Right ventricle myocardium inferior (tissue), 1 donor: ENCODE measurements at regions of chr14 and their contacts with region 1.

Region 1: DNA sequence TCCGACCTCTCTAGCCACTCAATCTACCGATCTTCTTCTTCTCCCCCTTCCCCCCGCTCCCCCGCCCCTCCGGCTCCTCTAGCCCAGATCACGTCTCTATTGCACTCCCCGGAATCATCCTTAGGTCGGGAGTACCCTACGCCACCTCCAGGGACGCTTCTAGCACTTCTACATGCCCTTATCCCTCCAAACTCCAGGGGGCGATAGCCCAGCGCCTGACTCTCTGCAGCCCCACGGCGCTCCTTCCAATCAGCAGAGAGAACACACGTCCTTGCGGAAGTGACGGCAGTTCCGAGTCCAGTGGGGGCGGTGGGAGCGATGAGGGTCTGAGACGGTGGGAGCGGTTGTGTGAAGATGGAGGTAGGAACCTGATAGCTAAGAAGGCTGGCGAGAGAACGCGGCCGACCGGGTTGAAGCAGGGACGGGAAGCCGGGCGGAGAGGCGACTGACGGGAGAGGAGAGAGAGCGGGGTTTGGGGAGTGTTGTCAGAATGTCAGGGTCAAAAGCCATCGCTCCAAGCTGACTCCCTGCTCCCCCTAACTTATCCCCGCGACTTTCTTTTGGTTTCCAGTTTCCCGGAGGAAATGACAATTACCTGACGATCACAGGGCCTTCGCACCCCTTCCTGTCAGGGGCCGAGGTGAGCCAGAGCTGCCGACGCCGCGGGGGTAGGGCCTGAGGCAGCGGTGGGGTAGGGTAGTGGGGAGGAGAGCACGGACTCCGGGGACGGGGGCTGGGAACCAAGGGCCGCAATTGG is at the starts of genes RAB2B and TOX4:
- DNase-seq: peak; percentile 96
- ATAC-seq: peak; percentile 100
- total RNA-seq, gene RAB2B: 15.1 TPM
- total RNA-seq, gene TOX4: 86.5 TPM

Region 2: DNA sequence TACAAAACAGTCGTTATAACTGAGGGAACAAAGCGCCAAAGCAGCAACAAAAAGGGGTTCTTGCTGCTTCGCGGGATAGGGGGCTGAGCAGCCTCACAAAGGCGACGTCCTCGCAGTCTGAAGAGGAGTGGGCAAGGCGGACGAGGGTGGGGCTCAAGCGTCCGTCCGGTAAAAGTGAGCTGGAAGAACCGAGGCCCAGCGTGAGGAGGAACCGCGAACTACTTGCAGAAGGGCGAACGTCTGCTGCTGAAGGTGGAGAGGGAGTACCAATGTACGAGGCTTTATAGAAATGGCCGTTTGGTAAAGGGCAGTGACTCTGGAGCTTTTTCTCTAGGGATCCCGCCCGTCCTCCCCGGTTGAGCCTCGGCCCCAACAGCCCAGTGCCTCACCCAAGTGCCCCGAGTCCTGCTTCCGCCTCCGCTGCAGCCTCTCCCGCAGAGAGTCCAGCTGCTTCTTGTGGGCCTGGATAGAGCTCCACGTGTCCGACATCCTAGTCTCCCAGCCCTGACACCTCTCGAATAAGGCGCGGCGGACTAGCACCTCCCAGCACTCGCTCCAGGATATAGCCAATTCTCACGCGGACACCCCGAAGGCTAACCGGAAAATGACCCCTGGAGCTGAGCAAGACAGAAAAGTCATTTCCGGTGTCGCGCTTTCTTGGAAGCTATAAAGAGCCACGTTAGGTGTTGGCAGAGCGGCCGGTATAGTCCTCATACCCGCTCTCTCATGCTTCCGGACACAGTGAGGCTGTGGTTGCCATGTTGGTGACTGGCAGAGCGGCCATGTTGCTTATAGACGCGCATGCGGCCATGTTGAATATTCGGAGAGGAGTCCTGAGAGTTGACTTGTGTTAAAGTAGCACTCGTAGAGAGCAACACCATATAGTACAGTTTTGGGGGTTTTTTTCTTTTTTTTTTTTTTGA is 33.9 kb after region 1 on chr14 and contains the start of gene METTL3:
- intact Hi-C with region 1: loop called (anchors 1 kb)
- DNase-seq: peak; percentile 99
- ATAC-seq: peak; percentile 99
- total RNA-seq, gene METTL3: 24.9 TPM

Region 3: DNA sequence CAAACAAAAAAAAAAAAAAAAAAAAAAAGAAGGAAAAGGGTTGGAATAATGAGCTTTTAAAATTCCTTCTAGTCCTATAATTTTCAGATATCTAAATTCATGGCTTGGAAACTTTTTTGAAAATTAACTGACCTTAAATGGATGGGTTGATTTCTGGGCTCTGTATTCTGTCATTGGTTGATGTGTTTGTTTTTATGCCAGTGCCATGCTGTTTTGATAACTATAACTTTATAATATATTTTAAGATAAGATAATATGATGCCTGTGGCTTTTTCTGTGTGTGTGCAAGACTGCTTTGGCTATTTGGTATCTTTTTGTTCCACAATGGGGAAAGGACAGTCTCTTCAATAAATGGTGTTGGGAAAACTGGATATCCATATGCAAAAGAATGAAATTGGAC is 95.5 kb after region 1 on chr14:
- intact Hi-C with region 1: no loop called
- DNase-seq: no peak
- ATAC-seq: no peak